T-cell (primary cell): ENCODE measurements at regions of chr10 and their contacts with region 1.

Region 1: DNA sequence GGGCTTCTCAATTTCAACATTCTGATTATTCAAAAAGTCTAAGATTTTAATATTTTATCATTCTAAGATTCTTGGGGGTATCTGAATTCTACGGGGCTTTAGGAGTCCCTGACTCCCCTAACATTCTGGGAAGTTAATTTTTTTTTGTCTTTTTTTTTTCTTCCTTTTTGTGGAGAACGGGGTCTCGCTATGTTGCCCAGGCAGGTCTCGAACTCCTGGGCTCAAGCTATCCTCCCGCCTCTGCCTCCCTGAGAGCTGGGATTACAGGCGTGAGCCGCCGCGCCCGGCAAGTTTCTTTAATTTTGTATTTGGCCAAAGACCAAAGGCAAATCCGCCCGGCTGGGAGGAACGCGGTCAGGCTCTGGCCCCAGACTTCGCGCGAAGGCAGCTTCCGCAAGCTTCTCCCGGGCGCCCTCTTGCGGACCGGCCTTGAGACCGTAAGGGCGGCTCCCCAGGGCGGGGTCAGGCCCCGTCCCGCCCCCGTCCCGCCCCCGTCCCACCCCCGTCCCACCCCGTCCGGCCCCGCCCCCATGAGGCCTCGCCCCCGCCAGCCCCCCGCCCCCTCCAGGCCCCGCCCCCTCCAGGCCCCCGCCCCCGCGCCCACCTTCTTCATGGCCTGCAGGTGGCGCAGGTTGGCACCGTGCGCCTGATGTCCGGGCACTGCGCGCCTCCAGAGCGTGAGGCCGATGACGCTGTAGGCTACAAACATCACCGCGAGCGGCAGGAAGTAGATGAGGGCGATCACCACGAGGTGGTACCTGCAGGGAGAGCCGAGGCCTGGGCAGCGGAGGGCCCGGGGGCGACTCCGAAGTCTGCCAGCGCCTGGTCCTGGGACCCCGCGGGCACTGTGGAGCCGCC is 8.2 kb downstream of the TACR2 start:
- DNase-seq: peak; percentile 81 to 96 (median 87)
- ATAC-seq: peak; percentile 91 to 95 (median 94)
- H3K4me3 ChIP-seq: peak overlapping the region in 1 of 2 donors; percentile 17
- H3K4me3 Mint-ChIP-seq: peak overlapping the region; percentile 49 to 73 (median 54)
- H3K27ac ChIP-seq: peak overlapping the region; percentile 82
- H3K27ac Mint-ChIP-seq: peak overlapping the region; percentile 81 to 86
- H3K4me1 ChIP-seq: peaks cover 3 to 24% of the 10 kb centered on the region in 2 experiments
- H3K4me1 Mint-ChIP-seq: peaks cover 21 to 25% (median 25%) of the 10 kb centered on the region in 3 donors
- H3K27me3 ChIP-seq: peaks cover 0 to 5% of the 10 kb centered on the region in 2 experiments
- H3K27me3 Mint-ChIP-seq: no peaks in the 10 kb centered on the region

Region 2: DNA sequence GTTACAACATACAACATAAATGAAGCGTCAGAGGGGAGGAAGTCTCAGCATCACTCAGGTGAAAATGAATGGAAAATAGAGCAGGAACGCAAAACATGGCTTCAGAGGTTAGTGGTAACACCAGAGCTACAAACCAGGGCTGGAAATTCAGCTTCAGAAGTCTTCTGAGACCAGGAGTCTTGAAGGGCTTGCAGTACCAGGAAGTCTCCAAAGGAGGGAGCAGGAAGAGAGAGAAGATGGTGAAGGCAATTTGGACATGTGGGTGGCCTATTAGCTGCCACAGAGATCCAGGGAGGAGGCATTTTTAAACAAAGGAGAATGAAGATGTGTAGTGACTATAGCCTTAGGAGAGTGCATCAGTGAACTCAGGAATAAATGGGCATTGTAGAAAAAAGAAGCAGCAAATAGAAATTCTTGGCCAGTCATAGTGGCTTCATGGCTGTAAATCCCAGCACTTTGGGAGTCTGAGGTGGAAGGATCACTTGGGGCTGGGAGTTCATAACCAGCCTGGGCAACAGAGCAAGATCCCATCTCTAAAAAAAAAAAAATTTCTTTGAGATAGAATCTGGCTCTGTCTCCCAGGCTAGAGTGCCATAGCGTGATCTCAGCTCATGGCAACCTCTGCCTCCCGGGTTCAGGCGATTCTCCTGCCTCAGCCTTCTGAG is 857.7 kb before region 1 on chr10:
- CTCF ChIA-PET with region 1: no interaction called
- POLR2A ChIA-PET with region 1: no interaction called
- DNase-seq: peak in 23 of 35 experiments; percentile 9 to 71 (median 27)
- ATAC-seq: peak; percentile 67 to 72 (median 68)
- H3K4me3 ChIP-seq: no peak overlapping the region
- H3K4me3 Mint-ChIP-seq: no peak overlapping the region
- H3K27ac ChIP-seq: no peak overlapping the region
- H3K27ac Mint-ChIP-seq: no peak overlapping the region
- H3K4me1 ChIP-seq: no peaks in the 10 kb centered on the region
- H3K4me1 Mint-ChIP-seq: no peaks in the 10 kb centered on the region
- H3K27me3 ChIP-seq: peaks cover 0 to 4% of the 10 kb centered on the region in 2 experiments
- H3K27me3 Mint-ChIP-seq: peaks cover 0 to 1% of the 10 kb centered on the region in 2 donors

Region 3: DNA sequence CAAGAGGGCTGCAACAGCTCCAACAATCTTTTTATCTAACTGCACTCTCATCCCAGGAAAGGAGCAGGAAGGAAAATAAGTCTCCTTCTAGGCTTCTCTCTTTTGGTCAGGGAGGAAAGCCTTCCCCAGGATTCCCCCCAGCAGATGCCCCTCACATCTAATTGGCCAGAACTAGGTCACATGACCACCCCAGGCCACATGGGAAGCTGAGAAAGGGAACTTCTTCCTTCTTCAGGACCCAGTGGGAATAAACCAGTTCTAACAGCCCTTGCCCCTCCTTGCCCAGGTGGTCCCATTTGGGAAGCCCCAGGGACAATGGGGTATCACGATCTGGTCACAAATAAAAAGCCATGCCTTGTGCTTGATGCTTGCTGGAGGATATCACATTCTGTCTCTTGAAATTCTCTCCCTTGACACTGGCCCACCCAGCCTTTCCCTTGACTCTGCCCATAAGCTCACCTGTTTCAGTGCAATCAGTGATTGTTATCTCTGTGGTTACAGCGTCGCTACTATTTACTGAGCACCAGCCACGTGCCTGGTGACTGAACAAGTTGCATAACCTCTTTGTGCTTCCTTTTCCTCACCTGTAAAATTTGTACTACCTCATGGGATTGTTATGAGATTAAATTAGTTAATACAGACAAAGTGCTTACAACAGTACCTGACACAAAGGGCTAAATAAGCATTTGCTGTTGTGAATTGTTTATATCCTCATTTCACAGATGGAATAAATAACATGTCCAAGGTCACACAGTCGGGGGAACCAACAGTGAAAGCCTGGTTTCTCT is 17.2 kb after region 1 on chr10:
- CTCF ChIA-PET with region 1: interaction called, 3 to 12 read pairs
- POLR2A ChIA-PET with region 1: interaction called in 1 of 2 experiments, 3 read pairs
- DNase-seq: peak in 33 of 35 experiments; percentile 32 to 78 (median 51)
- ATAC-seq: peak; percentile 89 to 96 (median 90)
- H3K4me3 ChIP-seq: no peak overlapping the region
- H3K4me3 Mint-ChIP-seq: peak overlapping the region in 1 of 3 donors; percentile 40
- H3K27ac ChIP-seq: peak overlapping the region; percentile 73
- H3K27ac Mint-ChIP-seq: peak overlapping the region; percentile 85 to 88
- H3K4me1 ChIP-seq: peaks cover 17 to 57% of the 10 kb centered on the region in 2 experiments
- H3K4me1 Mint-ChIP-seq: peaks cover 57 to 65% (median 62%) of the 10 kb centered on the region in 3 donors
- H3K27me3 ChIP-seq: peaks cover 0 to 3% of the 10 kb centered on the region in 2 experiments
- H3K27me3 Mint-ChIP-seq: no peaks in the 10 kb centered on the region

Region 4: GRCh38 chr10:69506834-69507721 is 98.5 kb after region 1 on chr10:
- CTCF ChIA-PET with region 1: interaction called, 4 to 12 read pairs
- POLR2A ChIA-PET with region 1: no interaction called
- DNase-seq: peak in 1 of 35 experiments; percentile 53
- ATAC-seq: peak in 3 of 4 experiments; percentile 1 to 20 (median 10)
- H3K4me3 ChIP-seq: peak overlapping the region in 1 of 2 donors; percentile 2
- H3K4me3 Mint-ChIP-seq: peak overlapping the region; percentile 57 to 61 (median 61)
- H3K27ac ChIP-seq: peak overlapping the region; percentile 72
- H3K27ac Mint-ChIP-seq: peak overlapping the region; percentile 70 to 84
- H3K4me1 ChIP-seq: peaks cover 0 to 15% of the 10 kb centered on the region in 2 experiments
- H3K4me1 Mint-ChIP-seq: peaks cover 10 to 19% (median 11%) of the 10 kb centered on the region in 3 donors
- H3K27me3 ChIP-seq: peaks cover 0 to 2% of the 10 kb centered on the region in 2 experiments
- H3K27me3 Mint-ChIP-seq: no peaks in the 10 kb centered on the region

Region 5: DNA sequence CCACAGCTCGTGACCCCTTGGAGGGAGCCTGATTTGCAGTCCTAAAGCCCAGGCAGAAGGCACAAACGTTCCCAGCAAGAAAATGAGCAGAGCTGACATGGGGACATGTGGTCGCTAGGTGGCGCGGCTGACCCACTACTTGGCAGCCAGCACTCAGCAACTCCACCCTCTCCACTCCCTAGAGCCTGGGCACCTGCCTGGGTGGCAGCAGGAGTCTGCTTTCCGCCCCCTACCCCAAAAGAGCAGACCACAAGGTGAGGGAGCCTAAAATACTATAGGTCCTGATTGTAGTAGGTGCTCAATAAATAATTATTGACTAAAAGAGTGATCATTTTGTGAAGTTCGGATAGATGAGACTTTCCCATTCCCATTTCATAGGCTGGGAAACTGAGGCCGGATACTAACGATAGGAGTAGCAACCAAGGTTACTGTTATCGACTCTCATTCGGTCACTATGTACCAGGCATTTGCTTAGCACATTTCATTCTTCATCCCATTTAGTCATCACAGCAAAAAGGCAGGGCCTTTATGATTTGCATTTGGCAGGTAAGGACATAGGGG is 107.2 kb after region 1 on chr10:
- CTCF ChIA-PET with region 1: interaction called in 1 of 2 experiments, 13 read pairs
- POLR2A ChIA-PET with region 1: no interaction called
- DNase-seq: peak; percentile 52 to 89 (median 75)
- ATAC-seq: peak; percentile 83 to 95 (median 94)
- H3K4me3 ChIP-seq: no peak overlapping the region
- H3K4me3 Mint-ChIP-seq: no peak overlapping the region
- H3K27ac ChIP-seq: no peak overlapping the region
- H3K27ac Mint-ChIP-seq: no peak overlapping the region
- H3K4me1 ChIP-seq: no peaks in the 10 kb centered on the region
- H3K4me1 Mint-ChIP-seq: peaks cover 0 to 6% (median 0%) of the 10 kb centered on the region in 3 donors
- H3K27me3 ChIP-seq: peaks cover 2 to 24% of the 10 kb centered on the region in 2 experiments
- H3K27me3 Mint-ChIP-seq: peaks cover 14 to 17% of the 10 kb centered on the region in 2 donors